ENCODE measurements at regions of chr11 and their contacts with region 1.

Region 1: GRCh38 chr11:124875943-124876817 is 10.9 kb downstream of the ROBO3 start:
- DNase-seq: peak in 1 of 2 experiments; percentile 72
- H3K4me3 ChIP-seq: peak overlapping the region; percentile 54
- H3K27ac ChIP-seq: no peak overlapping the region
- H3K4me1 ChIP-seq: no peaks in the 10 kb centered on the region
- H3K27me3 ChIP-seq: peaks cover 75% of the 10 kb centered on the region
- CTCF ChIP-seq: no peak; the same call in 1 of the 2 replicates

Region 2: GRCh38 chr11:124953753-124954589 is 77.8 kb after region 1 on chr11 and contains the start of gene CCDC15:
- CTCF ChIA-PET with region 1: interaction called, 3 read pairs
- POLR2A ChIA-PET with region 1: no interaction called
- intact Hi-C with region 1: loop called (anchors 5 kb)
- DNase-seq: peak; percentile 92 to 93
- H3K4me3 ChIP-seq: peak within 1 kb of the TSS; percentile 81
- H3K27ac ChIP-seq: peak within 1 kb of the TSS; percentile 64
- H3K4me1 ChIP-seq: peaks cover 16% of the 10 kb centered on the region
- H3K27me3 ChIP-seq: no peaks in the 10 kb centered on the region
- CTCF ChIP-seq: no peak
- total RNA-seq, gene CCDC15: 2.7 and 2.8 TPM in 2 replicates

Region 3: GRCh38 chr11:125141686-125142535 is 265.7 kb after region 1 on chr11:
- CTCF ChIA-PET with region 1: no interaction called
- POLR2A ChIA-PET with region 1: no interaction called
- intact Hi-C with region 1: loop called (anchors 5 kb)
- DNase-seq: peak in 1 of 2 experiments; percentile 46
- H3K4me3 ChIP-seq: no peak overlapping the region
- H3K27ac ChIP-seq: no peak overlapping the region
- H3K4me1 ChIP-seq: no peaks in the 10 kb centered on the region
- H3K27me3 ChIP-seq: no peaks in the 10 kb centered on the region
- CTCF ChIP-seq: peak; percentile 100